AG04449 (cell line): ENCODE measurements at regions of chr2 and their contacts with region 1.

Region 1: DNA sequence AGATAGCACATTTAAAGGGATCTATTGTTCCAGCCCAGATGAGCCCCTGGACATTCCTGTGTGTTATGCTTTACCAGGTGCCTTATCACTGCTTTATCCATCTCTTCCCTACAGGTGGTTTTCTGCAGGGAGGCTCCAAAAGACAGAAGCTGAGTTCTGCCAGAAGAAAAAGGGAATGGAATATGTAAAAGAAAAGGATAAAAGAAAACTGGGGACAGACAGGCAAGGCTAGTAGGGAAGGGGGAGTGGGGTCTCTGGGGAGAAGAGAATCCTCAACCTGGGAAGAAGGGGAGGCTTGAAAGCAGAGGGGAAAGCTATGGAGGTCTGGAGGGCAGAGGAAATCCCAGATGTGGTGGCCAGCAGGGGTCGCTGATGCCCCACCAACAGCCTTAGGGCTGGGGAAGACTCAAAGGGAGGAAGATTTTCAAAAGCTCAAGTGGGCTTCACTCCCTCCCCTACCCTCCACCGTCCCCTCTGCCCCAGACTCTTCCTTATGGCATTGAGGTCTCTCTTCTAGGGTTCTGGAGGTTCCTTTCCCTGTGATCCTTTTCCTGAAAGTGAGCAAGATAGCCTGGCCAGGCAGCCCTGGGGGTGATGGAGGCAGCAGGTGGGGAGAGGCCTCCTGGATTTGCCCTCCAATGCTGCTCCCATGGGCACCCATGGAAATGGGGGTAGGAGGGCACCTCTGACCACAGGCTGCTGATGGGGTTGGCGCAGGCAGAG is 178.1 kb upstream of the PKDCC start:
- DNase-seq: no peak
- H3K4me3 ChIP-seq: no peak overlapping the region
- CTCF ChIP-seq: peak; percentile 87

Region 2: GRCh38 chr2:41853427-41854216 is 16.1 kb before region 1 on chr2:
- CTCF ChIA-PET with region 1: interaction called, 262 read pairs
- POLR2A ChIA-PET with region 1: no interaction called
- DNase-seq: no peak
- H3K4me3 ChIP-seq: no peak overlapping the region
- CTCF ChIP-seq: peak; percentile 53

Region 3: DNA sequence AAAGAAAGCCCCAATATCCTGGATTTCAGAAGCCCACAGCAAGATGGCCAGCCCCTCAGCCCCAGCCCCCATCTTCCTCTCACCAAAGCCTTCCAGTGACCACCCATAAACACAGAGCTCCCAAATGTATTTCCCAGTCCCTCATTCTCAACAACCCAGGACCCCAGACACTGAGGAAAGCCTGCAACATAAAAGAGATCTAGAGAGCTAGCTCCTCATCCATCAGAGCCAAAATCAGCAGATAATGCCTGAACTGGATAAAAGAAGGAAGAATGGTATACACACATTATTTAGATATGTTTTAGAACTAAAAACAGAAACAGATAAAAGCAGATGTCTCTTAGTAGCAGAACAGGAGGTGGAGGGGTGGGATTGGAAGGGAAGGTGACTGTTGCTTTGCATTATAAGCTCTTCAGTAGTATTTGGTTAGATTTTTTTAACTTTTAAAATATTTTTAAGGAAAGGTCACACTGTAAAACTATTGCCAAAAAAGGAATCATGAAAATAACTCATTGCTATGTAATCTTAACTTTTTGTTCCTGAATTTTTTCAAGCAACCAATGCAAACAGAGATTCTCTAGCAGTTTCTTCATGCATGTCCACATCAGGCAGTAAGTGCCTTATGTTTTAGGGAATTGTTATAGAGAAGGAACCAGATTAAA is 33.9 kb after region 1 on chr2:
- CTCF ChIA-PET with region 1: interaction called, 46 read pairs
- POLR2A ChIA-PET with region 1: no interaction called
- DNase-seq: no peak
- H3K4me3 ChIP-seq: no peak overlapping the region
- CTCF ChIP-seq: no peak

Region 4: GRCh38 chr2:41966431-41966893 is 96.8 kb after region 1 on chr2:
- CTCF ChIA-PET with region 1: interaction called, 17 read pairs
- POLR2A ChIA-PET with region 1: no interaction called
- DNase-seq: peak; percentile 92
- H3K4me3 ChIP-seq: no peak overlapping the region
- CTCF ChIP-seq: no peak

Region 5: GRCh38 chr2:42060718-42061619 is 191.3 kb after region 1 on chr2:
- CTCF ChIA-PET with region 1: interaction called, 40 read pairs
- POLR2A ChIA-PET with region 1: no interaction called
- DNase-seq: no peak
- H3K4me3 ChIP-seq: no peak overlapping the region
- CTCF ChIP-seq: no peak

Region 6: DNA sequence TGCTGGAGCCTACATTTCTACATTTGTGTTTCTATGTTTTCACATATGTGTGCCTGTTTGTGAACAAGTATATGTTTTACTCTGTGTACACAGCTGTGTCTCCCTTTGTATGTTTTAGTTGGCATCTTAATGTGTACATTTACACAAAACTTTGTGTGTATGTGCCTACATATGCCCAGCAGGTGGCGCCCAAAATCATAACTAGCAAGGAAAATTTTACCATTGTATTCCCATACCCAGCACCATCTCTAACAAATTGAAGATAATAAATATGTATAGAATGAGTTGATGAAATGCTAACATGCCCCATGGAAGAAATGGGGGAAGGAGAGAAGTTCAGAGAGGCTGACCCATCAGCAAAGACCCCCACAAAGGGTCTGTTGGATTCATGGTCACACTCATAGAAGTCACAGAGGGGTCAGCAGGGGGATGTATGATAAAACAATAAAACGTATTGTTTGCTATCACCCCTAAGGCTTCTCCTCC is 226.3 kb after region 1 on chr2:
- CTCF ChIA-PET with region 1: interaction called, 1,155 read pairs
- POLR2A ChIA-PET with region 1: no interaction called
- DNase-seq: no peak
- H3K4me3 ChIP-seq: no peak overlapping the region
- CTCF ChIP-seq: peak; percentile 63